GM12878 (cell line): ENCODE measurements at regions of chr1 and their contacts with region 1.

Region 1: GRCh38 chr1:163290025-163290640 is 31.6 kb upstream of the NUF2 start:
- DNase-seq: no peak
- ATAC-seq: no peak
- H3K4me3 ChIP-seq: no peak overlapping the region
- H3K27ac ChIP-seq: no peak overlapping the region
- H3K4me1 ChIP-seq: no peaks in the 10 kb centered on the region
- H3K27me3 ChIP-seq: no peaks in the 10 kb centered on the region
- CTCF ChIP-seq: no peak
- EP300 ChIP-seq: no peak
- POLR2A ChIP-seq: no peak
- RAD21 ChIP-seq: no peak

Region 2: GRCh38 chr1:163144418-163144817 is 145.7 kb before region 1 on chr1:
- CTCF ChIA-PET with region 1: no interaction called
- POLR2A ChIA-PET with region 1: no interaction called
- RAD21 ChIA-PET with region 1: no interaction called
- SMC1A ChIA-PET with region 1: no interaction called
- in situ Hi-C with region 1: no loop called
- intact Hi-C with region 1: no loop called
- DNase-seq: no peak
- ATAC-seq: no peak
- H3K4me3 ChIP-seq: no peak overlapping the region
- H3K27ac ChIP-seq: no peak overlapping the region
- H3K4me1 ChIP-seq: no peaks in the 10 kb centered on the region
- H3K27me3 ChIP-seq: no peaks in the 10 kb centered on the region
- CTCF ChIP-seq: no peak
- EP300 ChIP-seq: no peak
- POLR2A ChIP-seq: no peak
- RAD21 ChIP-seq: no peak

Region 3: GRCh38 chr1:163240705-163241104 is 49.4 kb before region 1 on chr1:
- CTCF ChIA-PET with region 1: no interaction called
- POLR2A ChIA-PET with region 1: no interaction called
- RAD21 ChIA-PET with region 1: no interaction called
- SMC1A ChIA-PET with region 1: no interaction called
- in situ Hi-C with region 1: loop called (anchors 5 kb)
- intact Hi-C with region 1: no loop called
- DNase-seq: no peak
- ATAC-seq: no peak
- H3K4me3 ChIP-seq: no peak overlapping the region
- H3K27ac ChIP-seq: no peak overlapping the region
- H3K4me1 ChIP-seq: no peaks in the 10 kb centered on the region
- H3K27me3 ChIP-seq: no peaks in the 10 kb centered on the region
- CTCF ChIP-seq: no peak
- EP300 ChIP-seq: no peak
- POLR2A ChIP-seq: no peak
- RAD21 ChIP-seq: no peak